ENCODE measurements at regions of chr21 and their contacts with region 1.

Region 1: GRCh38 chr21:26124421-26124833 is 46.1 kb downstream of the APP start:
- DNase-seq: peak; percentile 84
- H3K4me3 ChIP-seq: no peak overlapping the region
- H3K27ac ChIP-seq: peak overlapping the region; percentile 60
- H3K4me1 ChIP-seq: peaks cover 58% of the 10 kb centered on the region
- H3K27me3 ChIP-seq: no peaks in the 10 kb centered on the region
- CTCF ChIP-seq: no peak
- POLR2A ChIP-seq: no peak

Region 2: DNA sequence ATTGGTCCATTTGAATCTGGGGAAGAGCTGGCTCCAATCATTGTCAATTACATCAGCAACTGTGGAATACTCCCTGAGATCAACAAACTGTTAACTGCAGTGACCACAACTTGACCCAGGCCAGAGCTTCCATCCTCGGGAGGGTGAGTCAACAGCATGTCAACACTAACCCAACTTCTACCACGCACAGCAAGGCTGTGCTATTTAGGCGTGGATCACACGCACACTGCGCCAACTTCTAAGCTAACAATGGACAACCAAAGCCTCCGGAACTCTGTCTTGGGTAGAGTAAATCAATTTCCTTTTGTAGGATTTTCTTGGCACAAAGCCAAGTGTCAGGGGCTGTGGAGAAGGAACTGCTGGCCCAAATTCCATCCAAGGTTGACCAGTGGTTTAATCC is 15.8 kb after region 1 on chr21:
- CTCF ChIA-PET with region 1: interaction called, 11 read pairs
- POLR2A ChIA-PET with region 1: no interaction called
- dilution Hi-C with region 1: no loop called
- intact Hi-C with region 1: no loop called
- DNase-seq: peak; percentile 98
- H3K4me3 ChIP-seq: no peak overlapping the region
- H3K27ac ChIP-seq: peak overlapping the region; percentile 83
- H3K4me1 ChIP-seq: peaks cover 39% of the 10 kb centered on the region
- H3K27me3 ChIP-seq: no peaks in the 10 kb centered on the region
- CTCF ChIP-seq: no peak
- POLR2A ChIP-seq: peak; percentile 53

Region 3: GRCh38 chr21:26153758-26154157 is 29.3 kb after region 1 on chr21:
- CTCF ChIA-PET with region 1: no interaction called
- POLR2A ChIA-PET with region 1: no interaction called
- dilution Hi-C with region 1: no loop called
- intact Hi-C with region 1: no loop called
- DNase-seq: no peak
- H3K4me3 ChIP-seq: no peak overlapping the region
- H3K27ac ChIP-seq: no peak overlapping the region
- H3K4me1 ChIP-seq: peaks cover 26% of the 10 kb centered on the region
- H3K27me3 ChIP-seq: no peaks in the 10 kb centered on the region
- CTCF ChIP-seq: no peak
- POLR2A ChIP-seq: no peak